Right lobe of liver (tissue), 6 donors: ENCODE measurements at regions of chr2 and their contacts with region 1.

Region 1: GRCh38 chr2:173027181-173028128 is 48.2 kb upstream of the MAP3K20 start:
- DNase-seq: peak in 2 of 3 donors; percentile 63 to 79
- ATAC-seq: peak; percentile 93 to 98 (median 95)
- H3K4me3 ChIP-seq: no peak overlapping the region
- H3K27ac ChIP-seq: peak overlapping the region in 1 of 3 donors; percentile 19
- H3K4me1 ChIP-seq: peaks cover 0 to 3% (median 0%) of the 10 kb centered on the region in 4 donors
- H3K27me3 ChIP-seq: no peaks in the 10 kb centered on the region
- CTCF ChIP-seq: peak; percentile 97 to 99 (median 98)
- POLR2A ChIP-seq: no peak

Region 2: DNA sequence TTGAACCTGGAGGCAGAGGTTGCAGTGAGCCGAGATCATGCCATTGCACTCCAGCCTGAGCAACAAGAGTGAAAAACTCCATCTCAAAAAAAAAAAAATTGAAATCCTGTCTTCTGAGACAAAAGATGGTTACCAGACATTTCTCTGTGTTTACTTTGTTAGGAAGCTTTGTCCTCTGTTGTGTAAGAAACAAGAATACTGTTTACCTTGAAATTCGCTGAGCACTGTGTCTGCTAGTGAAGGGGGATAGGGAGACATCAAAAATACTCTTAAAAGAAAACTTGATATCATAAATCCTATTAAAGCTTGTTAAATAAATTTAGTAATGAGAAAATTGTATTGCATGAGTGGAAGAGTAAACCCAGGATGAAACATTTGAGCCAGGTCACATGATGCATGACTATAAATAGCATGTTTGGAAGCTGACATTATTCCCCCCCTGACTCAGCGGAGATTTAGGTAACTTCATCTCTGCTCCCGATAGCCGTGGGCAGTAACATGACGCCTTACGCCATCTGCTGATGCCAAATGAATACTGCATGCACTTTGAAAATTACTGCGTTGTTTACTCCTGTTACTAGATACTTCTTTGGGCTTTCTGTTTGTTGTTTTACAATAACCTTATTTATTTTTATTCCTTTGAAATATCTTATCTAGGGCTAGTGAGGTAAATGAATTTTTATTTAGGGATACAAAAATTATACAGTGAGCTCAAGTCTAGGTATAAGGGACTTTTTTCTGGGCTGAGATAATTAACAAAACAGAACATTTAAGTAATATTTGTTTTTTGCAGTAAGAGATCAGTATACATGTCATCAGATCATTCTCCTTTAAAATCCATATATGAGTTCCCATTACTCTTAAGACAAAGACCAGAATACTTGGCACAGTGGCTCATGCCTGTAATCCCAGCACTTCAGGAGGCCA is 183.1 kb after region 1 on chr2:
- intact Hi-C with region 1: loop called in 1 of 2 experiments (anchors 5 kb)
- DNase-seq: peak in 1 of 3 donors; percentile 72
- ATAC-seq: peak; percentile 88 to 96 (median 95)
- H3K4me3 ChIP-seq: no peak overlapping the region
- H3K27ac ChIP-seq: peak overlapping the region; percentile 52 to 75 (median 68)
- H3K4me1 ChIP-seq: peaks cover 0 to 14% (median 0%) of the 10 kb centered on the region in 4 donors
- H3K27me3 ChIP-seq: no peaks in the 10 kb centered on the region
- CTCF ChIP-seq: peak; percentile 88 to 95 (median 92)
- POLR2A ChIP-seq: no peak

Region 3: DNA sequence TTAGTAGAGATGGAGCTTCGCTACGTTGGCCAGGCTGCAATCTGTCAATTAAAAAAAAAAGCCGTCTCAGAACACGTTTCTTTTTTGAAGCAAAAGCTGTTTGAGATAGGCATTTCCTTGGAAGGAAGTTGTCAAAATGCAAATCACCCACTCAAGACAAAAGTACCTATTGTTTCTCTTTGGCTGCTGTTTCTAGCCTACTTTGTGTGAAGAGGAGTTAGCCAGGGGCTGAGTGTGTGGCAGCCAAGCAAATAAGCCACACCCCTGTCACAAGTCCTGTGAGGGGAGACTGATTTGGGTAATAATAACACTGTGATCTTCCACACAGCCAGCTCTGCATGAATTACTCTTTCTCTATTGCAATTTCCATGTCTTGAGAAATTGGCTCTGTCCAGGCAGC is 279.8 kb after region 1 on chr2:
- intact Hi-C with region 1: no loop called
- DNase-seq: no peak
- ATAC-seq: no peak
- H3K4me3 ChIP-seq: no peak overlapping the region
- H3K27ac ChIP-seq: no peak overlapping the region
- H3K4me1 ChIP-seq: no peaks in the 10 kb centered on the region
- H3K27me3 ChIP-seq: no peaks in the 10 kb centered on the region
- CTCF ChIP-seq: no peak
- POLR2A ChIP-seq: no peak